Caco-2 (cell line): ENCODE measurements at regions of chr13 and their contacts with region 1.

Region 1: DNA sequence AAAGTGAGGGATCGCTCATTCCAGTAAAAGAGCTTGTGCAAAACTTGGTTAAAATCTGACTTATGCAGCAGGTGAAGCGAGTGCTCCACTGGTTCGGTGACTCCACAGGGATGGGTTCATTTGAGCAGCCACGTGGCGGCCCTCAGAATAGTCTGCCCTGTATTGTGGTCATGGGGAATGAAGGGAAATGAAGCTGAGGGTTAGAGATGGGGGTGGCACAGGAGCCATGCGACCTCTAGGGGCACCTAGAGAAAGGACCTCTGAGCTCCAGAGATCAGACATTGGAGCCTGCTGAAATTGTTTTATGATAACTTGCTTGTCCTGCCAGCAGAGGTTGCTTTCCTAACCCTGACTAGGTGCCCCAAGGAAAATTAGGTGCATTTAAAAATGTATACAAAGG is 26.6 kb downstream of the CBY2 start:
- DNase-seq: peak; percentile 64 to 68
- H3K4me3 ChIP-seq: no peak overlapping the region
- H3K4me3 Mint-ChIP-seq: no peak overlapping the region
- H3K27ac Mint-ChIP-seq: no peak overlapping the region
- H3K4me1 ChIP-seq: no peaks in the 10 kb centered on the region
- H3K4me1 Mint-ChIP-seq: no peaks in the 10 kb centered on the region
- H3K27me3 ChIP-seq: no peaks in the 10 kb centered on the region
- H3K27me3 Mint-ChIP-seq: no peaks in the 10 kb centered on the region
- CTCF ChIP-seq: peak; percentile 74 to 78

Region 2: GRCh38 chr13:45521297-45521696 is 207.5 kb before region 1 on chr13:
- CTCF ChIA-PET with region 1: no interaction called
- POLR2A ChIA-PET with region 1: no interaction called
- intact Hi-C with region 1: loop called (anchors 2 kb)
- DNase-seq: peak; percentile 64
- H3K4me3 ChIP-seq: no peak overlapping the region
- H3K4me3 Mint-ChIP-seq: peak overlapping the region; percentile 73
- H3K27ac Mint-ChIP-seq: peak overlapping the region; percentile 92
- H3K4me1 ChIP-seq: peaks cover 84% of the 10 kb centered on the region
- H3K4me1 Mint-ChIP-seq: peaks cover 61% of the 10 kb centered on the region
- H3K27me3 ChIP-seq: no peaks in the 10 kb centered on the region
- H3K27me3 Mint-ChIP-seq: no peaks in the 10 kb centered on the region
- CTCF ChIP-seq: no peak

Region 3: GRCh38 chr13:45695198-45695730 is 33.5 kb before region 1 on chr13:
- CTCF ChIA-PET with region 1: no interaction called
- POLR2A ChIA-PET with region 1: no interaction called
- intact Hi-C with region 1: no loop called
- DNase-seq: no peak
- H3K4me3 ChIP-seq: no peak overlapping the region
- H3K4me3 Mint-ChIP-seq: no peak overlapping the region
- H3K27ac Mint-ChIP-seq: no peak overlapping the region
- H3K4me1 ChIP-seq: no peaks in the 10 kb centered on the region
- H3K4me1 Mint-ChIP-seq: no peaks in the 10 kb centered on the region
- H3K27me3 ChIP-seq: no peaks in the 10 kb centered on the region
- H3K27me3 Mint-ChIP-seq: no peaks in the 10 kb centered on the region
- CTCF ChIP-seq: no peak